HCT116 (cell line): ENCODE measurements at regions of chr3 and their contacts with region 1.

Region 1: GRCh38 chr3:12984023-12984823 is 89.0 kb downstream of the IQSEC1 start:
- DNase-seq: peak; percentile 43
- ATAC-seq: peak; percentile 96
- H3K4me3 ChIP-seq: no peak overlapping the region
- H3K27ac ChIP-seq: no peak overlapping the region
- H3K4me1 ChIP-seq: peaks cover 2 to 14% of the 10 kb centered on the region in 2 experiments; a peak in 3 of 4 replicates
- H3K27me3 ChIP-seq: no peaks in the 10 kb centered on the region
- CTCF ChIP-seq: peak; percentile 66 to 84 (median 83); a peak in 5 of 6 replicates
- POLR2A ChIP-seq: no peak
- RAD21 ChIP-seq: peak; percentile 80

Region 2: GRCh38 chr3:12568747-12569146 is 415.5 kb before region 1 on chr3:
- CTCF ChIA-PET with region 1: no interaction called
- POLR2A ChIA-PET with region 1: no interaction called
- RAD21 ChIA-PET with region 1: no interaction called
- intact Hi-C with region 1: no loop called
- DNase-seq: no peak
- ATAC-seq: no peak
- H3K4me3 ChIP-seq: no peak overlapping the region
- H3K27ac ChIP-seq: no peak overlapping the region
- H3K4me1 ChIP-seq: no peaks in the 10 kb centered on the region
- H3K27me3 ChIP-seq: no peaks in the 10 kb centered on the region
- CTCF ChIP-seq: no peak
- POLR2A ChIP-seq: no peak
- RAD21 ChIP-seq: no peak

Region 3: GRCh38 chr3:12868039-12869034 is 115.9 kb before region 1 on chr3:
- CTCF ChIA-PET with region 1: interaction called, 5 read pairs
- POLR2A ChIA-PET with region 1: no interaction called
- RAD21 ChIA-PET with region 1: no interaction called
- intact Hi-C with region 1: loop called (anchors 1 kb)
- DNase-seq: peak; percentile 75
- ATAC-seq: peak; percentile 90
- H3K4me3 ChIP-seq: no peak overlapping the region
- H3K27ac ChIP-seq: no peak overlapping the region; the same call in 1 of the 2 replicates
- H3K4me1 ChIP-seq: peaks cover 10% of the 10 kb centered on the region in 2 experiments; a peak in 3 of 4 replicates
- H3K27me3 ChIP-seq: no peaks in the 10 kb centered on the region
- CTCF ChIP-seq: peak; percentile 83 to 90 (median 87)
- POLR2A ChIP-seq: no peak
- RAD21 ChIP-seq: peak; percentile 94

Region 4: GRCh38 chr3:12994607-12995388 is 10.6 kb after region 1 on chr3:
- CTCF ChIA-PET with region 1: interaction called, 35 read pairs
- POLR2A ChIA-PET with region 1: interaction called, 7 read pairs
- RAD21 ChIA-PET with region 1: interaction called in 1 of 2 experiments, 3 read pairs
- intact Hi-C with region 1: no loop called
- DNase-seq: peak; percentile 48
- ATAC-seq: peak; percentile 81
- H3K4me3 ChIP-seq: peak overlapping the region; percentile 83 to 94
- H3K27ac ChIP-seq: peak overlapping the region; percentile 73
- H3K4me1 ChIP-seq: peaks cover 19 to 44% of the 10 kb centered on the region in 2 experiments
- H3K27me3 ChIP-seq: no peaks in the 10 kb centered on the region
- CTCF ChIP-seq: peak in 2 of 3 experiments; percentile 79 to 87; a peak in 4 of 6 replicates
- POLR2A ChIP-seq: no peak
- RAD21 ChIP-seq: no peak